ENCODE measurements at regions of chr10 and their contacts with region 1.

Region 1: GRCh38 chr10:26437637-26438461 is at the start of gene APBB1IP:
- DNase-seq: peak; percentile 58
- H3K4me3 Mint-ChIP-seq: peak within 1 kb of the TSS; percentile 81
- H3K27ac Mint-ChIP-seq: peak within 1 kb of the TSS; percentile 98
- H3K4me1 Mint-ChIP-seq: peaks cover 50% of the 10 kb centered on the region
- H3K27me3 Mint-ChIP-seq: no peaks in the 10 kb centered on the region
- total RNA-seq, gene APBB1IP: 29.4 to 30.9 TPM

Region 2: DNA sequence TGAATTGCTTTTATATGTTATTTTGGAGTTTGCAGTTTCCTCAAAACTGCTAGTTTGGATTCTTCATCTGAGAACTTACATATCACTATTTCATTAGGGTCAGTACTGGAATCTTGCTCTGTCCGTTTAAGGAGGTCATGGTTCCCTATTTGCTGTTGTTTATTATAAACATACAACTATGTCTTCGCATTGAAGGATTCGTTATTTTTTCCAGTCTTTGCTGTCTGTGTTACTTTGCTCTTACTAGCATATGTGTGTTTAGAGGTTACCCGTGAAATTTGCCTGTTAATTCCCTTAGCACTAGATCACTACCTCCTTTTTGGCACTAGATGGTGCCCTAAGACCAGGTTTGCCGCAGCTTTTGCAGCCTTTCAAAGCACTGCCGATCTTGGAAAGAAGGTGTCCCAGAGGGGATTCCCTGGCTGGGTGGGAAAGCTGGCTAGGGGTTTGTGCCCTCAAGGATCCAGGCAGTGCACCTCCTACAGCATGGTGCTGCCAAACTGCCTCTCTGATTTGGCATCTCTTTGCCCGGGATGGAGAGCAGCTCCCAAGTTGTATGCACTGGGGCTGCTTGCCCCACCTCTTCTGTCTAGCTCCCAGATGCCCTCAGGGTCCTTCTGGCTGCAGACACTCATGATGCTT is 102.8 kb before region 1 on chr10:
- CTCF ChIA-PET with region 1: interaction called, 4 read pairs
- intact Hi-C with region 1: loop called (anchors 2 kb)
- DNase-seq: peak; percentile 76
- H3K4me3 Mint-ChIP-seq: peak overlapping the region; percentile 71
- H3K27ac Mint-ChIP-seq: peak overlapping the region; percentile 48
- H3K4me1 Mint-ChIP-seq: peaks cover 8% of the 10 kb centered on the region
- H3K27me3 Mint-ChIP-seq: no peaks in the 10 kb centered on the region

Region 3: DNA sequence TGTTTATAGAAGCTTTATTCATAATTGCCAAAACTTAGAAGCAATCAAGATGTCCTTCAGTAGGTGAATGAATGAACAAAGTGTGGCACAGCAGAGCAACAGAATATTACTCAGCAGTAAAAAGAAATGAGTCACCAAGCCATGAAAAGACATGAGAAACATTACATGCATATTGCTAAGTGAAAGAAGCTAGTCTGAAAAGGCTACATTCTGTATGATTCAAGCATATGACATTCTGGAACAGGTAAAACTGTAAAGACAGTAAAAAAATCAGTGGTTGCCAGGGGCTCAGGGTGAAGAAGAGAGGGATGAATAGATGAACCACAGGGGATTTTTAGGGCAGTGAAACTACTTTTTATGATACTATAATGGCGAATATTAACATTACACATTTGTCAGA is 80.6 kb before region 1 on chr10:
- CTCF ChIA-PET with region 1: no interaction called
- intact Hi-C with region 1: loop called (anchors 1 kb)
- DNase-seq: peak; percentile 32
- H3K4me3 Mint-ChIP-seq: no peak overlapping the region
- H3K27ac Mint-ChIP-seq: no peak overlapping the region
- H3K4me1 Mint-ChIP-seq: peaks cover 13% of the 10 kb centered on the region
- H3K27me3 Mint-ChIP-seq: no peaks in the 10 kb centered on the region

Region 4: DNA sequence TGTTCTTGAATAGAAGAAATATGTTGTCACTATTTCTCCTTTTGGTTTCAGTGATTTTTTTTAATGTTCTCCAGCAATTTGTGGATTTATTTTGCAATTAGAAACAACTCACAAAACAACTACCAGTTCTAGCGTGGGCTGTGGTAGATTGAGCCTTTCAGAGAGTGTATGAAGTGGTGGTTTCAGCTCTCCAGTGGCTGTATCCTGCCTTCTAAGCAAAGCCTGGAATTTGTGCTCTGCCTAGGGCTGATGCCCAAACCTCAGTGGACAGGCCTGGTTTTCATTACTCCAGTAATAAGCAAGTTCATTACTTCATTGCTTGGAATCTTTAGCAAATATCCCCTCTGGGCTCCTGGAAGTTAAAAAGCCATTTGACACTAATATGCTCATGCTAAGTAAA is 36.2 kb after region 1 on chr10:
- CTCF ChIA-PET with region 1: no interaction called
- intact Hi-C with region 1: no loop called
- DNase-seq: no peak
- H3K4me3 Mint-ChIP-seq: no peak overlapping the region
- H3K27ac Mint-ChIP-seq: peak overlapping the region; percentile 89
- H3K4me1 Mint-ChIP-seq: peaks cover 76% of the 10 kb centered on the region
- H3K27me3 Mint-ChIP-seq: no peaks in the 10 kb centered on the region